K562 (cell line): ENCODE measurements at regions of chr10 and their contacts with region 1.

Region 1: GRCh38 chr10:123451618-123452245 is 214.4 kb upstream of the GPR26 start:
- DNase-seq: peak; percentile 1 to 17 (median 16)
- ATAC-seq: peak; percentile 81
- H3K4me3 ChIP-seq: no peak overlapping the region
- H3K27ac ChIP-seq: no peak overlapping the region
- H3K4me1 ChIP-seq: no peaks in the 10 kb centered on the region
- H3K27me3 ChIP-seq: no peaks in the 10 kb centered on the region; a peak in 1 of 5 replicates
- CTCF ChIP-seq: 0 out of 6 replicates have a peak, but pooled peaks of 1 of the 3 experiments have one; percentile 18
- EP300 ChIP-seq: no peak
- POLR2A ChIP-seq: no peak
- RAD21 ChIP-seq: no peak

Region 2: GRCh38 chr10:123512901-123513775 is 61.4 kb after region 1 on chr10:
- CTCF ChIA-PET with region 1: no interaction called
- POLR2A ChIA-PET with region 1: no interaction called
- in situ Hi-C with region 1: no loop called
- intact Hi-C with region 1: loop called (anchors 10 kb)
- DNase-seq: no peak
- ATAC-seq: no peak
- H3K4me3 ChIP-seq: no peak overlapping the region
- H3K27ac ChIP-seq: no peak overlapping the region
- H3K4me1 ChIP-seq: no peaks in the 10 kb centered on the region
- H3K27me3 ChIP-seq: peaks cover 0 to 8% of the 10 kb centered on the region in 2 experiments; a peak in 2 of 5 replicates
- CTCF ChIP-seq: no peak
- EP300 ChIP-seq: no peak
- POLR2A ChIP-seq: no peak
- RAD21 ChIP-seq: no peak